Heart left ventricle (tissue), 16 donors: ENCODE measurements at regions of chr3 and their contacts with region 1.

Region 1: GRCh38 chr3:163384383-163384782 is 1693.9 kb downstream of the SI start:
- DNase-seq: no peak
- ATAC-seq: no peak
- H3K4me3 ChIP-seq: no peak overlapping the region
- H3K27ac ChIP-seq: no peak overlapping the region
- H3K4me1 ChIP-seq: no peaks in the 10 kb centered on the region
- H3K27me3 ChIP-seq: no peaks in the 10 kb centered on the region
- CTCF ChIP-seq: no peak
- POLR2A ChIP-seq: no peak

Region 2: GRCh38 chr3:162984752-162985151 is 399.6 kb before region 1 on chr3:
- intact Hi-C with region 1: loop called in 1 of 10 experiments (anchors 5 kb)
- DNase-seq: no peak
- ATAC-seq: no peak
- H3K4me3 ChIP-seq: no peak overlapping the region
- H3K27ac ChIP-seq: no peak overlapping the region
- H3K4me1 ChIP-seq: no peaks in the 10 kb centered on the region
- H3K27me3 ChIP-seq: no peaks in the 10 kb centered on the region
- CTCF ChIP-seq: no peak
- POLR2A ChIP-seq: no peak

Region 3: DNA sequence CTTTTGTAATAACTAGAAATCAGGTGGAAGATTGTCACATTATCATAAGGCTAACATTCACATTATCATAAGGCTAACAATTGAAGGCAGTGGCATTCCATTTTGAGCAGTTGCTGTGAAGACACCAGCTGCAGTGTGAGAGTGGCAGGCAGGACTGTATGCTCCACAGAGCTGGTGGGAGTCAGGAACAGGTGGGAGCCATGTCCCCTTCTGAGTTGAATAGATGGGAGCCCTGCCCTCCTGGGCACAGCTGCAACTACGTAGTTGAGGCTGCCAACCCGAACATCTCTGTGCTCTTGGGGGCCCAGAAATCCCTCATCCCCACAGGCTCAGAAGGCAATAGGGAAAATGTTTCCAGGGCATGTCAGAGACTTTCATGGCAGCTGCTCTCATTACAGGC is 66.3 kb after region 1 on chr3:
- intact Hi-C with region 1: no loop called
- DNase-seq: no peak
- ATAC-seq: no peak
- H3K4me3 ChIP-seq: no peak overlapping the region
- H3K27ac ChIP-seq: no peak overlapping the region
- H3K4me1 ChIP-seq: no peaks in the 10 kb centered on the region
- H3K27me3 ChIP-seq: no peaks in the 10 kb centered on the region
- CTCF ChIP-seq: no peak
- POLR2A ChIP-seq: no peak

Region 4: DNA sequence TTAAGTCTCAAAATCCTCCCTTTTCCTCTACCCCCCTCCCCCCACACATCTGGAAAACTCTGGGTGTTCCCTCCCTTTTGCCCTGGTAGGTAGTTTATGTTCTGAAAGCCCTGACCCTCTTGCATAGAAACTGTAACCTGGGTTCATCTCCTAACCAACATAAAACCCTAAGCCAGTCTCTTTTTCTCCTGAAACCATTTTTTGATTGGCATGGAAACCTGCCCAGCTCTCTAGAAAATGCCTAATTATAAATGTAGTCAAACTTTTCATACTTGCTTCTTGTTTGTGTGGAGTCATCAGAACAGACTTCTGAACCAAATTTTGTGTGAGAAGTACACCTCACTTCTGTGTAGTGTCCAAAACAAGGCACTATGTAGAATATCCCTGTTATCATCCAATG is 429.6 kb after region 1 on chr3:
- intact Hi-C with region 1: no loop called
- DNase-seq: no peak
- ATAC-seq: no peak
- H3K4me3 ChIP-seq: no peak overlapping the region
- H3K27ac ChIP-seq: no peak overlapping the region
- H3K4me1 ChIP-seq: no peaks in the 10 kb centered on the region
- H3K27me3 ChIP-seq: no peaks in the 10 kb centered on the region
- CTCF ChIP-seq: no peak
- POLR2A ChIP-seq: no peak